ENCODE measurements at regions of chr14 and their contacts with region 1.

Region 1: GRCh38 chr14:22986508-22987054 is 4.2 kb upstream of the AJUBA start:
- DNase-seq: peak; percentile 78 to 88
- ATAC-seq: peak; percentile 51 to 59; a peak in 4 of 6 replicates
- H3K4me3 ChIP-seq: no peak overlapping the region
- H3K27ac ChIP-seq: no peak overlapping the region
- H3K4me1 ChIP-seq: peaks cover 7% of the 10 kb centered on the region; the same call in 1 of the 3 replicates
- CTCF ChIP-seq: peak; percentile 91
- EP300 ChIP-seq: no peak
- POLR2A ChIP-seq: no peak
- RAD21 ChIP-seq: peak; percentile 82 to 93

Region 2: GRCh38 chr14:22939684-22940083 is 46.9 kb before region 1 on chr14:
- CTCF ChIA-PET with region 1: interaction called, 13 read pairs
- POLR2A ChIA-PET with region 1: no interaction called
- DNase-seq: no peak
- ATAC-seq: no peak
- H3K4me3 ChIP-seq: no peak overlapping the region
- H3K27ac ChIP-seq: no peak overlapping the region
- H3K4me1 ChIP-seq: no peaks in the 10 kb centered on the region
- CTCF ChIP-seq: no peak
- EP300 ChIP-seq: no peak
- POLR2A ChIP-seq: no peak
- RAD21 ChIP-seq: no peak

Region 3: GRCh38 chr14:22955702-22956569 is 30.6 kb before region 1 on chr14:
- CTCF ChIA-PET with region 1: interaction called, 104 read pairs
- POLR2A ChIA-PET with region 1: interaction called, 14 read pairs
- DNase-seq: no peak
- ATAC-seq: no peak
- H3K4me3 ChIP-seq: peak overlapping the region; percentile 47
- H3K27ac ChIP-seq: peak overlapping the region; percentile 88 to 97
- H3K4me1 ChIP-seq: peaks cover 14% of the 10 kb centered on the region
- CTCF ChIP-seq: no peak
- EP300 ChIP-seq: no peak
- POLR2A ChIP-seq: no peak
- RAD21 ChIP-seq: no peak

Region 4: DNA sequence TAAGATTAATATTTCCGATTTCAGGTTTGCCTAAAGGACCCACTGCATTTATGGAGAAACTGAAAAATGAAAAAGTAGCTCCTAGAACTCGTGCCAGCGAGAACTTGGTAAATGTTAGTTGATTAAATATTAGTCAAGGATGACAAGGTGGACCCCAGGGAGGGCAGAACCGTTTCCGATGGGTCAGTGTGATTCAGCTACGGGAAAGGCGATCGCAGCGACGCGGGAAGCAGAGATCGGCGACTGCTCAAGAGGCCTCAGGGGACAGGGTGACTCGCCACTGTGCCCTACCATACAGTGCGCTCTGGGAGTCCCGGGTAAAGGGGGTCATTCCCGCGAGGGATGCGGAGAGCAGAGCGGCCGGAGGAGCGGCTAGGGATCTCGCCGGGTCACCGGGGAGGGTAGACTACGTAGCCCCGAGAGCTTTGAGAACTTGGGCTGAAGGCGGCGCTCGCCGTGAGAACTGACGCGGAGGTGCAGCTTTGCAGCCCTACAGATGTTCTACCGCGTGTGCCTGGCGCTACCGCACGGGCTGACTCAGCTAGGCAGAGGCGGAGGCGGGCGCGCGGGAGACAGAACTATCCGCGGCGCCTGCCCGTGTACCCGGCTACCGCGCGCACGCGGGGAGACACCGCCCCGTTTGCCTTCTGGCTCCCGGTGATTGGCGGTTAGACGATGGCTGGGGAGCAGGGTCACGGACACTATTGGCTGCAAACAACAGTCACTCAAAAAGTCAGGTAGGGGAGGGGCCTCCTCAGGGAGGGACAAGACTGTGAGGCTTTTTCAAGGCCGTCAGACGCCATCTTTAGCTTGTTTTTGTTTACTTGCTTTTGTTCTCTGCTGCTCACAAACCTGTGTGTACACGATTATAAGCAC is 20.2 kb after region 1 on chr14:
- CTCF ChIA-PET with region 1: interaction called, 73 read pairs
- POLR2A ChIA-PET with region 1: interaction called, 19 read pairs
- DNase-seq: peak; percentile 97 to 99
- ATAC-seq: peak; percentile 96 to 98
- H3K4me3 ChIP-seq: peak overlapping the region; percentile 60
- H3K27ac ChIP-seq: peak overlapping the region; percentile 93
- H3K4me1 ChIP-seq: peaks cover 27% of the 10 kb centered on the region
- CTCF ChIP-seq: peak; percentile 35; the same call in 2 of the 3 replicates
- EP300 ChIP-seq: no peak
- POLR2A ChIP-seq: peak; percentile 81
- RAD21 ChIP-seq: 0 out of 5 replicates have a peak, but pooled peaks of 1 of the 2 experiments have one; percentile 11

Region 5: GRCh38 chr14:23034483-23035302 is 48.1 kb after region 1 on chr14 and contains the start of gene PSMB5:
- CTCF ChIA-PET with region 1: interaction called, 1,206 read pairs
- POLR2A ChIA-PET with region 1: no interaction called
- DNase-seq: peak; percentile 98
- ATAC-seq: peak; percentile 97 to 99
- H3K4me3 ChIP-seq: peak within 1 kb of the TSS; percentile 76
- H3K27ac ChIP-seq: peak within 1 kb of the TSS; percentile 89 to 97
- H3K4me1 ChIP-seq: peaks cover 13% of the 10 kb centered on the region
- CTCF ChIP-seq: no peak
- EP300 ChIP-seq: no peak
- POLR2A ChIP-seq: peak; percentile 80
- RAD21 ChIP-seq: no peak
- polyA plus RNA-seq, gene PSMB5: 283 and 337 TPM in 2 replicates

Region 6: GRCh38 chr14:23076785-23077408 is 90.3 kb after region 1 on chr14:
- CTCF ChIA-PET with region 1: interaction called, 13 read pairs
- POLR2A ChIA-PET with region 1: no interaction called
- DNase-seq: peak in 1 of 2 experiments; percentile 33
- ATAC-seq: peak; percentile 51 to 55; a peak in 3 of 6 replicates
- H3K4me3 ChIP-seq: no peak overlapping the region
- H3K27ac ChIP-seq: no peak overlapping the region; a peak in 1 of 6 replicates
- H3K4me1 ChIP-seq: peaks cover 49% of the 10 kb centered on the region
- CTCF ChIP-seq: peak; percentile 80
- EP300 ChIP-seq: no peak
- POLR2A ChIP-seq: no peak
- RAD21 ChIP-seq: peak; percentile 48 to 56; a peak in 4 of 5 replicates

Measured in A549 (cell line).